ENCODE measurements at regions of chr17 and their contacts with region 1.

Region 1: DNA sequence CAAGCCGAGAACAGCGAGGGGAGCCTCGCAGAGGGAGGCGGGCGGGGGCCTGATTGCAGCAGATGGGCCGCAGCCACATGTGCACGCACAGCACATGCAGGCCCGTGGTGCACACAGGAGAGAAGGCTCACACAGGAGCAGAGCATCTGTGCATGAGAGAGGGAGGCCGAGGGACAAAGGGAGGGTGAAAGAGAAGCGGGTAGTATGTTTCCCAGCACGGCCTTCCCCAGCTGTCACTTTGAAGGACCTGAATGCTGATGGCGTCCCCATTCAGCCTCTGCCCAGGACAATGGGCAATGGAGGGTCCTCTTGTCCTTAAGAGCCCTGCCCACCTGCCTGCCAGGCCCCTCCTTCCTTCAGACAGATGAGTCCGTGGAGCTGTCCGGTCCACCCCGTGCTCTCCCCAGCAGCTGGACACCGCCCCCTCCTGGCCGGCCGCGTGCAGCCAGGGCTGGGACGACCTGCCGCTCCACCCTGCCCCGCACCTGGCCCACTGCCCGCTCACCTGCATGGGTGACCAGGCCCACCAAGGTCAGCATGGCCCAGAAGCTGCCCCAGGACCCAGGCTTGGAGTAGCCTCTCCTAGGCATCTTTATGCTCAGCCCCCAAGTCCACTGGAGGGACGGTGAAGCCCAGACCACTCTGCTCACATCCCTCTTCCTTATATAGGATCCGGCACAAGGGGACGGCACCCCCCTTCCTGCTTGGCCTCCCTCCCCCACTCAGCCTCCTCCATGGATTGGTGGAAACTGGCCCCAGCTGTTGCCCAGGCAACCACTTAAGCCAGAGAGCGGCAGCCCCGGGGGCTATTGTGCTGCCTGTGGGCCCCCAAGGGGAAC is at the start of gene BTBD17:
- DNase-seq: peak; percentile 42
- H3K4me3 Mint-ChIP-seq: no peak within 1 kb of the TSS
- H3K27ac Mint-ChIP-seq: no peak within 1 kb of the TSS
- H3K4me1 Mint-ChIP-seq: no peaks in the 10 kb centered on the region
- H3K27me3 Mint-ChIP-seq: peaks cover 43% of the 10 kb centered on the region
- CTCF ChIP-seq: peak; percentile 52
- total RNA-seq, gene BTBD17: not detected in 2 replicates

Region 2: GRCh38 chr17:74296548-74296936 is 64.9 kb before region 1 on chr17:
- CTCF ChIA-PET with region 1: interaction called, 7 read pairs
- POLR2A ChIA-PET with region 1: no interaction called
- intact Hi-C with region 1: loop called (anchors 1 kb)
- DNase-seq: peak; percentile 29
- H3K4me3 Mint-ChIP-seq: no peak overlapping the region
- H3K27ac Mint-ChIP-seq: no peak overlapping the region
- H3K4me1 Mint-ChIP-seq: peaks cover 6% of the 10 kb centered on the region
- H3K27me3 Mint-ChIP-seq: peaks cover 21% of the 10 kb centered on the region
- CTCF ChIP-seq: peak; percentile 26

Region 3: DNA sequence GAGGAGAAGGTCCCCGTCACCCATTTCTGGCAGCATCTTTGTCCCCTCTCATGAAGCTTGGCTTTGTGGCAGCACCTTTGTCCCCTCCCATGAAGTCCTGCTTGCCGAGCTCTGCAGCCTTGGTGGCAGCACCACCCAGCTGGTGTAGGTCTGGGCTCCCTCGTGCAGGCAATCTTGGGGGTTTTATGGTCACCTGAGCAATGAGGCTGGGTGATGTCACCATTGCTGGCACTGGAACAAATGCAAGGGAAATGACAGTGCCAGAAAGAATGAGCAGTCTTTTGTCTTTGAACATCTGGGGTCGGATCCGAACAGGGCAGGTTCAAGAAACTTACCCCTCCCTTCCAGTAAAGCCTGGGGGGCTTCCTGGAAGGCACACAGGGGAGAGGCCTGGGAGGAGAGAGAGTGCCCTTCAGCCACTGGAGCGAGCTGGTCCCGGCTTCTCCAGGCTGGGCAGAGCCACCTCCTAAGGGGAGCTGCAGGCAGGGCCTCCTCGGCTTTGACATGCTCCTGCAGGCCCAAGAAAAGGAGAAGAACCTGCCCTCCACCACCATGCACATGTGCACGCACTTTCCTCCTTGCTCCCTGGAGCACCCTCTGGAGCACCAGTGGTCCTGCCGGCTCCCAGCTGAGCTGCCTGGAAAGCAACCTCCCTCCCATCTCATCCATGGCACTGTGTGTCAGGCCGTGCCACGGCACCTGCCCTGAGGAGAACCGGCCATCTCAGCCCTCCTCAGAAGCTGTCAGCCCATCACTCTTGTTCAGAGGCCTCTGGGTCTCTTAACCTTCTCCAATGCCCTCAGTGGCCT is 15.8 kb before region 1 on chr17:
- CTCF ChIA-PET with region 1: no interaction called
- POLR2A ChIA-PET with region 1: no interaction called
- intact Hi-C with region 1: no loop called
- DNase-seq: no peak
- H3K4me3 Mint-ChIP-seq: no peak overlapping the region
- H3K27ac Mint-ChIP-seq: no peak overlapping the region
- H3K4me1 Mint-ChIP-seq: no peaks in the 10 kb centered on the region
- H3K27me3 Mint-ChIP-seq: peaks cover 20% of the 10 kb centered on the region
- CTCF ChIP-seq: no peak

Measured in MCF 10A (cell line).